ENCODE measurements at regions of chr22 and their contacts with region 1.

Region 1: DNA sequence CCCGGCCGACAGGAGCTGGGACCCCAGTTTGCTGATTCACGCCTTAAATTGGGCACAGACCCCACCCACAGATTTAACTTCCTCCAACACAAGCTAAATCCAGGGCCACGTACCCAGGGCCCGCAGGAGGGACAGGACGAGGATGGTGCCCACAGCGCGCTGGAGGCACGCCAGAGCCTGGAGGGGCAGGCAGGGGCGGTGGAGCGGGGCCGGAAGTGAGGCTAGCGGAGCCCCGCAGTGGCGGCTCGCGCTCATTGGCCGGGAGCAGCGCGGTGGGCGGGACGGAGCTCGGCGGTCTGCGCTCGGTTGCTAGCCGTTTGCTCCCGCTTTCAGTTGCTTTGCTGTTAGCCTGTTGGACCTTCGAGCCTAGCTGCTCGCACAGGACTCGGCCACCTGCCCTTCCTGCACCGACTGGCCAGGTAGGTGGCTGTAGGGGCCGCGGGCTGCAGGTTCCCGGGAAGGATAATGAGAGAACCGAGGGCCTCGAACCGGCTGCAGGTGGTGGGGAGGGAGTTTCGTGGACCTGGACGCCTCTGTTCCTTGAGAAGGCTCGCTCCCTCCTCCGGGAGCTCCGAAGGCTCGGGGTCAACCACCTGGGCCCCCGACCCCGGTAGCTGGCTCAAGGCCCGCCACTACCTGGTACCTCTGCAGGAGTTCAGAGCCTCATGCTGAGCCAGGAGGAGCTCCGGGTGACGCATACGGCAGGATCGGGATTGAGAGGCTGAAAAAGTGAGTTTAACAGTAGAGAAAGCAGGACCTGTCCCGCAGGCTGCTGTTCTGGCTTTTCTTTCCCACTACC is at the start of gene CCDC134:
- DNase-seq: peak; percentile 95 to 97
- ATAC-seq: peak; percentile 97
- H3K4me3 ChIP-seq: peak within 1 kb of the TSS; percentile 65 to 77
- H3K27ac ChIP-seq: peak within 1 kb of the TSS in 1 of 2 donors; percentile 4
- H3K4me1 ChIP-seq: no peaks in the 10 kb centered on the region
- H3K27me3 ChIP-seq: no peaks in the 10 kb centered on the region
- total RNA-seq, gene CCDC134: 4.1 to 7.3 TPM

Region 2: DNA sequence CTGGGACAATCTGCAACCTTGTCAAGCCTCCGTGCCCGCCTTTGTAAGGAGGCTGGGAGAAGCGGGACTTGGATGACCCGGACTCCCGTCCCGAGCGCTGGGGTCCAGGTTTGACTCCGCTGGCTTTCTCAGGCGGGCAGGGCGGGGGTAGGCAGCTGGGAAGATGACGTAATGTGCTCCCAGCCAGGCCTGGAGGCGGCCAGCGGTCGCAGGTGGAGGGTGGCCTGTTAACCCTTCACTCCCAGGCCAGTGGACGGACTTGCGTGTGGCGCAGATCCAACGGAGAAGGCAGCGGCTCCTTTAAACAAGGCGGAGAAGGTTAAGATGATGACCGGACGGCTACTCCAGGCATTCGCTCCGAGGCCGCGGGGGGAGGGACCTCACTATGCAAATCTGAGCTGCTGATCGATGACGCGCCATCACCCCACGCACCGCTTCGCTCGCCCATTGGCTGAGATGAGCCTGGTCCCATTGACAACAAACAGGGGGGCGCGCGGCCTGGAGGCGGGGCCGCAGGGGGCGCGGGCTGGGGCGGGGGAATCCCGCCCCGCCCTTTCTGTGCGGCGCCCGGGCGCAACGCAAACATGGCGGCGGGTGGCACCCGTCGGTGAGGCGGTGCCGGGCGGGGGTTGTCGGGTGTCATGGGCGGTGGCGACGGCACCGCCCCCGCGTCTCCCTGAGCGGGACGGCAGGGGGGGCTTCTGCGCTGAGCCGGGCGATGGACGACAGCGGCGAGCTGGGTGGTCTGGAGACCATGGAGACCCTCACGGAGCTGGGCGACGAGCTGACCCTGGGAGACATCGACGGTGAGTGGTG is 32.2 kb after region 1 on chr22 and contains the start of gene SREBF2:
- intact Hi-C with region 1: loop called in 1 of 2 experiments (anchors 2 kb)
- DNase-seq: peak; percentile 100
- ATAC-seq: peak; percentile 97
- H3K4me3 ChIP-seq: peak within 1 kb of the TSS; percentile 80 to 92
- H3K27ac ChIP-seq: peak within 1 kb of the TSS in 1 of 2 donors; percentile 89
- H3K4me1 ChIP-seq: no peaks in the 10 kb centered on the region
- H3K27me3 ChIP-seq: no peaks in the 10 kb centered on the region
- total RNA-seq, gene SREBF2: 68.2 to 86.3 TPM

Region 3: GRCh38 chr22:42007922-42008321 is 207.4 kb after region 1 on chr22:
- intact Hi-C with region 1: no loop called
- DNase-seq: no peak
- ATAC-seq: no peak
- H3K4me3 ChIP-seq: no peak overlapping the region
- H3K27ac ChIP-seq: no peak overlapping the region
- H3K4me1 ChIP-seq: no peaks in the 10 kb centered on the region
- H3K27me3 ChIP-seq: no peaks in the 10 kb centered on the region

Measured in aorta (tissue), 5 donors.